ENCODE measurements at regions of chr17 and their contacts with region 1.

Region 1: DNA sequence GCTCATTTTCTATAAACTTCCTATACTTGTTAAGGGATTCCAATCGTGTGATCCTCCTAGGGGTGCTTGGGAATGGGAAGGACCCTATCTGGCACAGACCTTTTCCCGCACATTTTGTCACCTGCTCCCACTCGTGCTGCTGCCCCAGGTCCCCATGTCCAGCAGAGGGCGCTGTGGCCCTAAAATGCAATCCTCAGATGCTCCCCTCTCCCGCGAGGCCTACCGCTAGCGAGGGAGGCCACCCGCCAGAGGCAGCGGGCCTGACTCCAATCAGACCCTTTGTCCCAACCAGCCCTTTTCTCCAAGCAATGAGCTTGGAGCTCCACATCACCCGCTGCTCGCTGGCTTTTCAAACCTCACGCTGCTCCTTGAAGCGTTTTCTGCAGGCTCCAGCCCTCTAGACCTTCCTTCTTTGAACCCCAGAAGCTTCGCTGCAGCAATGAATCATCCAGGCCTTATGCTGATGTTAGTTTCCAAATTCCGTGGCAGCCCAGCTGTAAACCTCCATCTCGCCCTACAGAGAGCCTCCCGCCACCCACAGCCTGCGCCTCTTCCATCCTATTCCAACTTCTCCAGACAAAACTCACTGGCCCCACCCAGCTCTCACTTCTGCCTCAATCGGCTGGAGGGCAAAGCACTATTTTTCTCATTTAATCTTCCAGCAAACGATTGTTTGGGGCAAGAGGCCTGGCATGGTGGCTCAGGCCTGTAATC is 23.6 kb upstream of the FZD2 start:
- DNase-seq: peak; percentile 88
- ATAC-seq: peak; percentile 94
- H3K4me3 ChIP-seq: no peak overlapping the region
- H3K4me3 Mint-ChIP-seq: no peak overlapping the region
- H3K27ac ChIP-seq: no peak overlapping the region
- H3K27ac Mint-ChIP-seq: no peak overlapping the region
- H3K4me1 ChIP-seq: peaks cover 0 to 10% of the 10 kb centered on the region in 2 donors
- H3K4me1 Mint-ChIP-seq: peaks cover 10% of the 10 kb centered on the region
- H3K27me3 ChIP-seq: peaks cover 0 to 3% (median 0%) of the 10 kb centered on the region in 4 experiments
- H3K27me3 Mint-ChIP-seq: peaks cover 13% of the 10 kb centered on the region
- CTCF ChIP-seq: peak; percentile 96

Region 2: DNA sequence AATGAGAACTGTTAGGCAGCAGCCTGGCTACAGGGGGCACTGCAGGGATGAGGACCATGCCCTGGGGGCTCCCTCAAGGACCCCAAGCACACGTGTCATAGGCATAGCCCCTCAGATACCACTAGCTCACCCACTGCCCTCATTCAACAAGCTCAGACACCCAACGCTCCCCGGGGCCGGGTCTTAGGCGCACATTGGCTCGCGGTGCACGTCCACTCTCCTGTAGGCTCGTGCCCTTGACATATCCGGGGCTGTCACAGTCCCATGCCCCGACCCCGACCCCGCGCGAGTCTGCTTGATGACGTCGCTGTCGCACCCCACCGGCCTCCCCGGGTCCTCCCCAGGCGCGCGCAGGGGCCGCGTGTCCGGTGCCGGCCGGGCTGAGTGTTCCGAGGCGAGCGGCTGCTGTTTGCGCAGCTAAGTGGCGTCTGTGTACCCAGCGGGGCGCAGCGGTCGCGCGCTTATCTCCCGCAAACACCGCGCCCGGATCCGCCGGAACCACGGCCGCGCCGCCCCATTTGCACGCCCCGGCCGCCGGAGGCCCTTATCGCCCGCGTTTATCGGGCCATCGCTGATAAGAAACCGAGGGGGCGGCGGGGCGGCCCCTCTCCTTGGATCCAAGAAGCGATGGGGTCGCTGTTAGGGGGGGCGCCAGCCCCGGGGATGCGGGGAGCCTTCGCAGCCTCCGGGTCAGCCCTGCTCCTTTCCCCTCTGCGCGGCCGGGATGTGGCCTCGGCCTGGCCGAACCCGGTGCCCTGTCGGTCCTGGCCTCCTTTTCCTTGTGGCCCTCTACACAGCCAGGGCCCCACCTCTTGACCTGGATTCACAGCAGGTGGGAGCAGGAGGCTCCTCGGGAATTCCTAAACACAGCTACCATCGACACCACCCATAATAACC is 549.9 kb before region 1 on chr17:
- CTCF ChIA-PET with region 1: no interaction called
- POLR2A ChIA-PET with region 1: no interaction called
- intact Hi-C with region 1: no loop called
- DNase-seq: peak; percentile 23
- ATAC-seq: peak; percentile 14
- H3K4me3 ChIP-seq: peak overlapping the region in 3 of 5 experiments; percentile 11 to 29 (median 21)
- H3K4me3 Mint-ChIP-seq: peak overlapping the region; percentile 34
- H3K27ac ChIP-seq: no peak overlapping the region
- H3K27ac Mint-ChIP-seq: no peak overlapping the region
- H3K4me1 ChIP-seq: peaks cover 10 to 11% of the 10 kb centered on the region in 2 donors
- H3K4me1 Mint-ChIP-seq: peaks cover 2% of the 10 kb centered on the region
- H3K27me3 ChIP-seq: peaks cover 0 to 45% (median 30%) of the 10 kb centered on the region in 4 experiments
- H3K27me3 Mint-ChIP-seq: peaks cover 59% of the 10 kb centered on the region
- CTCF ChIP-seq: no peak

Region 3: DNA sequence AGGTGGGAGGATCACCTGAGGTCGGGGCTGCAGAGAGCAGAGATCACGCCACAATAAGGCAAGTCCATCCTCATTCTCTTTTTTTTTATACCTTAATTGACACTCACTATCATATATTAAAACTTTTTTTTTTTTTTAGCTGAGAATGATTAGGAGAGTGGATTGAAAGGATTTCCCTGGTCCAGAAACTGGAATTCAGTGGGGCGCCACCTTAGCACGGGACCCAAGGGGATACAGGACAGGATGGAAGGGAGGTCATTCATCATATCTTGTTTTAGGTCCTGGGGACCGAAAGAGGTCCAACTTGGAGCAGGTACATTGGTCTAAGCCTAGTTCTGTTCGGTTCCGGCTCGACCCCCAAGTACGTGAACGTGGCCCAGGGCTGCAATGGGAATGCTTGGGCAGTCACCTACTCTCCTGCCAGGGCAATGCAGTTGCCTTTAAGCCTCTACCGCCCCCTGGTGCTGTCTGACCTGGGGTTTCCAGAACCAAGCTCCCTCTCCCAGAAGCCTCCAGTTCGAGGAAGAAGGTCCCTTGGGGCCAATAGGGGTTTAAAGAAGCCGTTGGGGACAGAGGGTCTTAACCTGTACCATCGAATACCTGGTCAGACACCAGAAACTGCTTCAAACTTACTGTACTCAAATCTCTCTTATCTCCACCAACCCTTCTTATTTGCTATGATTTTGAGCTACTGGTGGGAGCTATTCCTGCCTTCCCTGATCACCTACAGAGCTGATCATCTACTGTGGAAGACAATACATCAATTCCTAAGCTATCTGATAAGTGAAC is 10.6 kb before region 1 on chr17:
- CTCF ChIA-PET with region 1: interaction called, 28 read pairs
- POLR2A ChIA-PET with region 1: no interaction called
- intact Hi-C with region 1: no loop called
- DNase-seq: peak; percentile 38
- ATAC-seq: peak; percentile 33
- H3K4me3 ChIP-seq: no peak overlapping the region
- H3K4me3 Mint-ChIP-seq: no peak overlapping the region
- H3K27ac ChIP-seq: no peak overlapping the region
- H3K27ac Mint-ChIP-seq: no peak overlapping the region
- H3K4me1 ChIP-seq: no peaks in the 10 kb centered on the region
- H3K4me1 Mint-ChIP-seq: no peaks in the 10 kb centered on the region
- H3K27me3 ChIP-seq: peaks cover 0 to 2% (median 0%) of the 10 kb centered on the region in 4 experiments
- H3K27me3 Mint-ChIP-seq: peaks cover 17% of the 10 kb centered on the region
- CTCF ChIP-seq: no peak

Region 4: GRCh38 chr17:44546671-44547606 is 13.2 kb after region 1 on chr17:
- CTCF ChIA-PET with region 1: interaction called, 15 read pairs
- POLR2A ChIA-PET with region 1: interaction called, 4 read pairs
- intact Hi-C with region 1: no loop called
- DNase-seq: no peak
- ATAC-seq: no peak
- H3K4me3 ChIP-seq: no peak overlapping the region
- H3K4me3 Mint-ChIP-seq: no peak overlapping the region
- H3K27ac ChIP-seq: no peak overlapping the region
- H3K27ac Mint-ChIP-seq: no peak overlapping the region
- H3K4me1 ChIP-seq: no peaks in the 10 kb centered on the region
- H3K4me1 Mint-ChIP-seq: no peaks in the 10 kb centered on the region
- H3K27me3 ChIP-seq: peaks cover 0 to 19% (median 6%) of the 10 kb centered on the region in 4 experiments
- H3K27me3 Mint-ChIP-seq: peaks cover 38% of the 10 kb centered on the region
- CTCF ChIP-seq: no peak

Region 5: GRCh38 chr17:44604116-44604767 is 70.6 kb after region 1 on chr17:
- CTCF ChIA-PET with region 1: no interaction called
- POLR2A ChIA-PET with region 1: no interaction called
- intact Hi-C with region 1: no loop called
- DNase-seq: no peak
- ATAC-seq: no peak
- H3K4me3 ChIP-seq: no peak overlapping the region
- H3K4me3 Mint-ChIP-seq: no peak overlapping the region
- H3K27ac ChIP-seq: no peak overlapping the region
- H3K27ac Mint-ChIP-seq: no peak overlapping the region
- H3K4me1 ChIP-seq: no peaks in the 10 kb centered on the region
- H3K4me1 Mint-ChIP-seq: no peaks in the 10 kb centered on the region
- H3K27me3 ChIP-seq: peaks cover 0 to 2% (median 0%) of the 10 kb centered on the region in 4 experiments
- H3K27me3 Mint-ChIP-seq: peaks cover 25% of the 10 kb centered on the region
- CTCF ChIP-seq: no peak

Region 6: GRCh38 chr17:44636562-44636961 is 102.9 kb after region 1 on chr17:
- CTCF ChIA-PET with region 1: interaction called, 72 read pairs
- POLR2A ChIA-PET with region 1: no interaction called
- intact Hi-C with region 1: loop called (anchors 1 kb)
- DNase-seq: peak; percentile 43
- ATAC-seq: no peak
- H3K4me3 ChIP-seq: no peak overlapping the region
- H3K4me3 Mint-ChIP-seq: no peak overlapping the region
- H3K27ac ChIP-seq: no peak overlapping the region
- H3K27ac Mint-ChIP-seq: no peak overlapping the region
- H3K4me1 ChIP-seq: no peaks in the 10 kb centered on the region
- H3K4me1 Mint-ChIP-seq: no peaks in the 10 kb centered on the region
- H3K27me3 ChIP-seq: peaks cover 0 to 3% (median 0%) of the 10 kb centered on the region in 4 experiments
- H3K27me3 Mint-ChIP-seq: peaks cover 19% of the 10 kb centered on the region
- CTCF ChIP-seq: peak; percentile 66

Region 7: GRCh38 chr17:44655983-44656710 is 122.5 kb after region 1 on chr17 and contains the start of gene MEIOC:
- CTCF ChIA-PET with region 1: interaction called, 10 read pairs
- POLR2A ChIA-PET with region 1: interaction called, 3 read pairs
- intact Hi-C with region 1: no loop called
- DNase-seq: peak; percentile 37
- ATAC-seq: peak; percentile 86
- H3K4me3 ChIP-seq: peak within 1 kb of the TSS in 2 of 5 experiments; percentile 23 to 28
- H3K4me3 Mint-ChIP-seq: peak within 1 kb of the TSS; percentile 83
- H3K27ac ChIP-seq: no peak within 1 kb of the TSS
- H3K27ac Mint-ChIP-seq: peak within 1 kb of the TSS; percentile 53
- H3K4me1 ChIP-seq: peaks cover 3 to 13% of the 10 kb centered on the region in 2 donors
- H3K4me1 Mint-ChIP-seq: peaks cover 5% of the 10 kb centered on the region
- H3K27me3 ChIP-seq: peaks cover 0 to 28% (median 17%) of the 10 kb centered on the region in 4 experiments
- H3K27me3 Mint-ChIP-seq: peaks cover 28% of the 10 kb centered on the region
- CTCF ChIP-seq: no peak
- total RNA-seq, gene MEIOC: 0.12 and 0.29 TPM in 2 replicates

Region 8: GRCh38 chr17:44672479-44673093 is 138.9 kb after region 1 on chr17:
- CTCF ChIA-PET with region 1: interaction called, 47 read pairs
- POLR2A ChIA-PET with region 1: no interaction called
- intact Hi-C with region 1: loop called (anchors 1 kb)
- DNase-seq: peak; percentile 20
- ATAC-seq: no peak
- H3K4me3 ChIP-seq: no peak overlapping the region
- H3K4me3 Mint-ChIP-seq: no peak overlapping the region
- H3K27ac ChIP-seq: no peak overlapping the region
- H3K27ac Mint-ChIP-seq: no peak overlapping the region
- H3K4me1 ChIP-seq: no peaks in the 10 kb centered on the region
- H3K4me1 Mint-ChIP-seq: no peaks in the 10 kb centered on the region
- H3K27me3 ChIP-seq: no peaks in the 10 kb centered on the region
- H3K27me3 Mint-ChIP-seq: peaks cover 3% of the 10 kb centered on the region
- CTCF ChIP-seq: peak; percentile 65

Region 9: GRCh38 chr17:44864866-44865660 is 331.4 kb after region 1 on chr17:
- CTCF ChIA-PET with region 1: interaction called, 10 read pairs
- POLR2A ChIA-PET with region 1: no interaction called
- intact Hi-C with region 1: no loop called
- DNase-seq: peak; percentile 80
- ATAC-seq: peak; percentile 60
- H3K4me3 ChIP-seq: no peak overlapping the region
- H3K4me3 Mint-ChIP-seq: no peak overlapping the region
- H3K27ac ChIP-seq: no peak overlapping the region
- H3K27ac Mint-ChIP-seq: no peak overlapping the region
- H3K4me1 ChIP-seq: no peaks in the 10 kb centered on the region
- H3K4me1 Mint-ChIP-seq: no peaks in the 10 kb centered on the region
- H3K27me3 ChIP-seq: no peaks in the 10 kb centered on the region
- H3K27me3 Mint-ChIP-seq: no peaks in the 10 kb centered on the region
- CTCF ChIP-seq: peak; percentile 95

Measured in B cell (primary cell).